Activated CD8-positive, alpha-beta T cell treated with anti-CD3 and anti-CD28 coated beads for 36 hours (primary cell): ENCODE measurements at regions of chr22 and their contacts with region 1.

Region 1: DNA sequence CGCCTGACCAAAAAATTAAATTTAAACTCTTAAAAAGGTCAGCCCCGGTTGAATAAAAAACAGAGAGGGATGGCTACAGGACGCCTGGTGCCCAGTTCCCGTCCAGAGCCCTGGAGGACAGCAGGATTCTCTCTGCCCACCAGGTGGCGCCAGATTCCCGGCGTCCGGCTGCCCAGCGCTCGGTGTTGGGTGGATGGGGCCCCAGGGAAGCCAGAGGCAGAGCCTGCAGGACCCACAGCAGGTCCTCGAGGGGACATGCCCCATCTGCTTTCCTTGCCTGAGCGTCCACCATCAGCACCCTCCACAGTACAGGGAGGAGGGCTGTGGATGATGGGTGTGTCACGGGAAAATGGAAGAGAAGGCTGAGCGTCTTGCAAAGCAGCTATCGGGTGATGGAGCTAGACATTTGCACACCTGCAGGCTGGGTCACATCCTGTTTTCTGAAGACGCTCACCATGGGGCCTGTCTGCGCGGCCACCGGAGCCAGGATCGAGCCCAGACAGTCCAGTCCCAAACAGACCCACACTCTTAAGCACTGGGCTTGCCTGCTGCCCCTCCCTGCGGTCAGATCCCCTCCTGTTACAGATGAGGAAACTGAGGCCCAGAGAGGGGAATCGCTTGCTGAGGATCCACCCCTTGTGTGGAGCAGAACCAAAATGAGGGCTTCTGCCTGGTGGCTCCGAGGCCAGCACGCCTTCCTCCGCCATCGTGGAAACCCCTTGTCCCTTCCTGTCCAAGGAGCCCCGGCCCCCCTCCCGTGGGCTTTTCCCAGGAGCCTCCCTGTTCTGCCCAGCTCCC is 18.5 kb upstream of the CBX7 start:
- DNase-seq: peak; percentile 87
- ATAC-seq: peak; percentile 79
- H3K4me3 Mint-ChIP-seq: peak overlapping the region; percentile 49
- H3K27ac Mint-ChIP-seq: peak overlapping the region; percentile 70
- H3K4me1 Mint-ChIP-seq: peaks cover 43% of the 10 kb centered on the region
- H3K27me3 Mint-ChIP-seq: no peaks in the 10 kb centered on the region
- CTCF ChIP-seq: peak; percentile 99

Region 2: GRCh38 chr22:39183991-39184585 is 13.1 kb after region 1 on chr22:
- CTCF ChIA-PET with region 1: interaction called, 20 read pairs
- POLR2A ChIA-PET with region 1: no interaction called
- intact Hi-C with region 1: no loop called
- DNase-seq: no peak
- ATAC-seq: no peak
- H3K4me3 Mint-ChIP-seq: no peak overlapping the region
- H3K27ac Mint-ChIP-seq: no peak overlapping the region
- H3K4me1 Mint-ChIP-seq: no peaks in the 10 kb centered on the region
- H3K27me3 Mint-ChIP-seq: no peaks in the 10 kb centered on the region
- CTCF ChIP-seq: no peak

Region 3: DNA sequence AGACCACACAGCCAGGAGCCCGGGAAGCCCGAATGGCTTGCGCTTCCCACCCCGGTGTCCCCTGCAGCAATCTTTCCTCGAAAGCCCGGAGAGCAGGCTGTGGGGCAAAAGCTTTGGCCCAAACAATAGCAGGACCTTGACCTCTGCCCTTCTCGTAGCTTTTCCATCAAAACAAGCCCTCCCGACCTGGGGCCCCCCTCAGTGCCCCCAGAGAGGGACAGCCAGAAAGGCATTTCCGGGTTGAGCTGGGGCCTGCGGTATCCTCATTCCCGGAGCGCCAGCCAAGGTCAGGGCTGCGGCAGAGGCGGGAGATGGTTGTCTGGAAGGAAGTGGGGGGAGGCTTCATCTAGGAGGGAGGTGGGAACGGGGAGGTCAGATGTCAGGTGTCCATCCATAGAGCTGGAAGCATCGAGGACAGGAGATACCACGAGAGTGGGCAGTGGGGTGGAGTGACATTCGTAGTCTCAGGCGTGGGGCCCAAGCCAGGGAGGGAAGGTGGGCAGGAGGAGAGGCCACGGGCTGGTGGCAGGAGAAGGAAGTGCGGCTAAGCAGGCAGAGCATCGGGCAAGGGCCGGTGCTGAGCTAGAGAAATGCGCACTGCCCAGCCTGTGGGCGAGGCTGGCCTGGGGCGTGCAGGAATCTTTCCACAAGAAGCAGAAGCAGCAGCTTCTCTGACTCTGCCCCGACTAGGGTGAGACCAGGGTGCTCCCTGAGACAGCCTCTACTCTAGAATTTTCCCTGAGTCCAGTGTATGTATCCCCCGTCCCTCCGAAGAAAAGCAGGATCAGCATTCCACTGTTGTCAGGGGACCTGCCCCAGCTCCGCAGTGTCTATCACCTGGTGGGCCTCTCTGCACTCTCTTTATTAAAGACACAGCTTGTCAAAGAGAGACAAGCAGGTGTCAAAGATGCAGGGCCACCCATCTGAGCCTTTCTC is 59.5 kb after region 1 on chr22:
- CTCF ChIA-PET with region 1: interaction called, 18 read pairs
- POLR2A ChIA-PET with region 1: no interaction called
- intact Hi-C with region 1: no loop called
- DNase-seq: no peak
- ATAC-seq: no peak
- H3K4me3 Mint-ChIP-seq: no peak overlapping the region
- H3K27ac Mint-ChIP-seq: no peak overlapping the region
- H3K4me1 Mint-ChIP-seq: peaks cover 29% of the 10 kb centered on the region
- H3K27me3 Mint-ChIP-seq: peaks cover 19% of the 10 kb centered on the region
- CTCF ChIP-seq: no peak

Region 4: DNA sequence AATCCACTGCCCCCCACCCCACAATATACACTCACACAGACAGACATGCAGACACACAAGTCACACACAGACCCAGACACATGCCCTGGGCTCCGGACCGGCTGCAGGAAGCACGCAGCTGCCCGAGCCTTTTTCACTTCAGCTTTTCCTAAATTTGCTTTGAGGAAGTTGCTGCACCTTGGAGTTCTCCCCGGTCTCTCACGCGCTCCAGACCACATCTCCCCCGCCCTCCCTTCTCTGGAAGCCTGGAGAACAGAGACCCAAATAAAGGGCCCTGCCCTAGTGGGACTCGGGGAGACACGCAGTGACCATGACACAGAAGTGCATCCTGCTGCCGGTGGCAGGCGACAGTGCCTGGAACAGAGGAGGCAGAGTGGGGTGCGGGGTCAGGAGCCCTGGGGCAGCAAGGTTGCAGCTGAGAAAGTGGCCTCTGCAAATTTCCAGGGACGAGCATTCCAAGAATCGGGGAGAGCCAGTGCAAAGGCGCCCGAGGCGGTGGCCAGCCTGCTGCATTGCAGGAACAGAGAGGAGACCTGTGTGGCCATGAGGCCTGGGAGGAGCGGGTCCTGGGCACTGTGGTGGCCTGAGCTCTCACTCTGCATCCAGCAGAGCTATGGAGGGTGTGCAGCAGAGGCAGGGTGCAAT is 129.3 kb after region 1 on chr22:
- CTCF ChIA-PET with region 1: interaction called, 135 read pairs
- POLR2A ChIA-PET with region 1: no interaction called
- intact Hi-C with region 1: no loop called
- DNase-seq: no peak
- ATAC-seq: no peak
- H3K4me3 Mint-ChIP-seq: no peak overlapping the region
- H3K27ac Mint-ChIP-seq: no peak overlapping the region
- H3K4me1 Mint-ChIP-seq: no peaks in the 10 kb centered on the region
- H3K27me3 Mint-ChIP-seq: peaks cover 24% of the 10 kb centered on the region
- CTCF ChIP-seq: no peak

Region 5: DNA sequence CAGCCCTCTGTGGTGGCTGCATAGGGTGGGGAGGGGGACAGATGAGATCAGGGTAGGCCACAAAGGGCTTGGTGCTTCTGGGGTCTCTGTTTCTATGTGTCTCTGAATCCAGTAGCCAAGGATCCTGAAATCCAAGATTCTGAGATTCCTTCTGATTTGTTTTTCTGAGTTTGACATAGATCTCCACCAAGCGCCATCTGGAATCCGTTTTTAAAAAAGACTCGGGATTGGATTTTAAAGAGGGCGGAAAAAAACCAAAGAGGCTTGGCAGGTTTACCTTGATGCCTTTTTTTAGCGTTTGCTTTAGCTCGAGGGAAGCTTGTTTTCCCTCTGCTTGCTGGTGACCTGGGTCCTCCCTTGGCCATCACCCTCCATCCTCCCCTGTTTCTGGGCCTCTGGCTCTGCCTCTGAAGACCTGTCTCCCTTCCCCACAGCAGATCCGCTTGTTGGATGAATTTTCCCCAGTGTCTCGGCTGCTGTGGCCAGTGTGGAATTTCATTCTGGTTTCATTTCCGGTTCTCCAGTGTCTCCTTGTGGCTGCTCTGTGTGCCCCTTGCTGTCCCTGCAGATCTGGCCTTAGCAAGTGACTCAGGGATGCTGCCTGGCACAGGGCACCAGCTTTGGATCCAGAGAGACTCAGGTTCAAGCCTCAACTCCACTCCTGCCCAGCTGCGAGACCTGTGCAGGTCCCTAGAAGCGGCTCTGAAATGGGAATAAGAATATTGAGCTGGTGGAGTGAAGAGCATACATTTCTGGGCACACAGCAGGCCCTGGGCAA is 193.9 kb after region 1 on chr22:
- CTCF ChIA-PET with region 1: no interaction called
- POLR2A ChIA-PET with region 1: no interaction called
- intact Hi-C with region 1: no loop called
- DNase-seq: no peak
- ATAC-seq: no peak
- H3K4me3 Mint-ChIP-seq: no peak overlapping the region
- H3K27ac Mint-ChIP-seq: no peak overlapping the region
- H3K4me1 Mint-ChIP-seq: peaks cover 5% of the 10 kb centered on the region
- H3K27me3 Mint-ChIP-seq: no peaks in the 10 kb centered on the region
- CTCF ChIP-seq: no peak